AG04449 (cell line): ENCODE measurements at regions of chr1 and their contacts with region 1.

Region 1: GRCh38 chr1:110011527-110012041 is 22.8 kb upstream of the STRIP1 start:
- DNase-seq: no peak
- H3K4me3 ChIP-seq: no peak overlapping the region
- CTCF ChIP-seq: peak; percentile 61

Region 2: DNA sequence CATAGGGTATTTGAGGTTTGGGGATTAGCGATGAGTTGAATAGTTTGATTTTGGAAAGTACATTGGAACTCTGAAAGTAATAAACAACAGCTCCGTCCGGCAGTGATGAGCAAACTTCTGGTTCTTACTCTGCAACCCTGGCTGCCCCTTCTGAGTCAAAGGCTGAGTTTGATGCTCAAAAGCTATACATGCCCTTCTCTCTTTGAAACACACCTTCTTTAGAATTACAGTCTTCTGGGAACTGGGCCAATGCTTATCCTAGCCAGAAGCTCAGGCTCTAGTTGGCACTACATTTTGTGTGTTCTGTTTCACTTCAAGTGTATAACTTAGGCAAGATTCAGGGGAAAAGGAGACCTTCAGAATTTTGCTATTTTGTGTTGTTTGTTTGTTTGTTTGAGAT is 17.7 kb before region 1 on chr1:
- CTCF ChIA-PET with region 1: interaction called, 16 read pairs
- POLR2A ChIA-PET with region 1: no interaction called
- DNase-seq: no peak
- H3K4me3 ChIP-seq: no peak overlapping the region
- CTCF ChIP-seq: no peak

Region 3: DNA sequence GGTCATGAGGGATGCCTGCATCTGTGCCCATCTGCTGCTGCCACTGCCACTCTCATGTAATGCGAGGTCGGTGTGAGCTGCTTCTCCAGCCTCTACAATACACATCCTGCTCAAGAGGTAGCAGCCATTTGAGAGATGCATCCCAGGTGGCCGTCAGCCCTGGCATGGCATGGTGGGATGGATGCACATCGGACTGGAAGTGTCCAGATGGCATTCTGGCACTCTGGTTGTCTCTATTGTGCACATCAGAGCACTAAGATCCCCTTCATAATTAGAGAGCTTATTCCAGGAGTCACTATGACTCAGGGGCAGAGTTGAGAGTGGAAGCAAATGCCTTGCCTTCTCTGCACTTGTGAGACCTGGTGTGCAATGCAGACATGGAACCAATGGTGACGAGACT is 26.7 kb after region 1 on chr1:
- CTCF ChIA-PET with region 1: no interaction called
- POLR2A ChIA-PET with region 1: no interaction called
- DNase-seq: no peak
- H3K4me3 ChIP-seq: no peak overlapping the region
- CTCF ChIP-seq: no peak